HEK293T (cell line): ENCODE measurements at regions of chr10 and their contacts with region 1.

Region 1: DNA sequence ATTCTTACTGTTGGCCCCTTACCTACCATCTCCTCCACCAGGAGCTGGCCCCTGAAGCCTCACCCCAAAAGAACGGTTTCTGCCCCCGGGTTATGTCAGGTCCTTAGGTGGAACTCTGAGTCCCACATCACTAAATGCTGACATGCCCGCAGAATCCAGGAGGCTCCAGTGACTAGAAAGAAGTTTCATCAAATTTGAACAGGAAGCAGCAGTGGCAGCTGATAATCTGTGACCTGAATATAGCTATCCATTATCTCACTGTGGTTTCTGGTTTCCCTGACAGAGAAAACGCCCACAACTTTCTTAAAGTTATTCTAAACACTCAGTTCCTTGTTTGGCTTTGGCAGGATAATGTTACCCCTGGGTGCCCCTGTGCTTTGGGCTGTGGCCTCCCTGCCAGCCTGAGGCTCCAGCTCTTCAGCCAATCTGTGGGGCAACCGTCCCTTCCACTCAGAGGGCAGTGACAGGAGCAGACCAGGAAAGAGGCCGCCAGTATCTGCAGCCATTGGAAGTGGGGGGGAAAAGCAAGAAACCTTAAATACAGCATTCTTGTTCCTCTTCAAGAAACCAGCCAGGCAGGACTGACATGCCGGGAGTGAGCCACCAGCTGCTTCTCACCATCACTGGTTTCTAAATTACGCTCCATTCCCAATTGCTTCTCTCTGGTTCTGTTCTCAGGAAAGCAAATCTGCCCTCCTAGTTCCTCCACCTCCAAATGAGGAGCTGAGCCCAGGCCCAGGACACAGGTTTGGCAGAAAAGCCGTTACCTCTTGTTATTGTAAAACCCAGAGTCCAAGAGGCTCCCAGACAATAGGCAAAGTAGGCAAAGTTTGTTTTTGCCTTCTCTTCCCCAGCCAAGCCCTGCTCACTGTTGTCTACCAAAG is 41.2 kb upstream of the VCL start:
- DNase-seq: no peak

Region 2: GRCh38 chr10:73332221-73332778 is 624.4 kb before region 1 on chr10:
- CTCF ChIA-PET with region 1: no interaction called
- POLR2A ChIA-PET with region 1: no interaction called
- DNase-seq: no peak

Region 3: DNA sequence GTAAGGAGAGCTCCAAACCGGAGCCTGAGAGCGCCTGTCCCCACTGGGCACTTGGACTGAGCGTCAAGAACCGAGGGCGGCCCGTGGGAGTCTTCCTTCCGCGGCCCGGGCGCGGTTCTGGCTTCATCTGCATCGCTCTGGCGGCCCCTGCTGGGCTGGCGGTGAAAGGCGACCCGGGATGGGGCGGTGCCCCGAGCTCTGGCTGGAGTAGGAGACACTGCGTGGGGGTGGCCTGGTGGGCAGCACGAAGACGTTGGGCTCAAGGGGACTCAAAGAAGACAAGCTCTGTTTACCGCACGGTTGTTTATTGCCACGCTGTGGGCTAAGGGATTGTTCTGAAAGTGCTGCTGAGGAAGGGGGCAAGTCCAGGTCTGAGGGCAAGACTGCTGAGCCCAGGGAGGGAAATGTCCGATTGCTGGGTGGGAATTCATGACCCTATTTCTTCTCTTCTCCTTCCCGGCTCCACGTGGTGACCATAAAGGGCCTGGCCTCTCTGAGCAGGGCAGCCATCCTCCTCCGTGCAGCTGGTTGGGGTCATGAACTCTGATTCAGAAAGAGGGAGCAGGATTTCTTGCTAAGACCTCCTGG is 16.0 kb before region 1 on chr10:
- CTCF ChIA-PET with region 1: interaction called, 14 read pairs
- POLR2A ChIA-PET with region 1: interaction called, 3 read pairs
- DNase-seq: peak; percentile 84

Region 4: DNA sequence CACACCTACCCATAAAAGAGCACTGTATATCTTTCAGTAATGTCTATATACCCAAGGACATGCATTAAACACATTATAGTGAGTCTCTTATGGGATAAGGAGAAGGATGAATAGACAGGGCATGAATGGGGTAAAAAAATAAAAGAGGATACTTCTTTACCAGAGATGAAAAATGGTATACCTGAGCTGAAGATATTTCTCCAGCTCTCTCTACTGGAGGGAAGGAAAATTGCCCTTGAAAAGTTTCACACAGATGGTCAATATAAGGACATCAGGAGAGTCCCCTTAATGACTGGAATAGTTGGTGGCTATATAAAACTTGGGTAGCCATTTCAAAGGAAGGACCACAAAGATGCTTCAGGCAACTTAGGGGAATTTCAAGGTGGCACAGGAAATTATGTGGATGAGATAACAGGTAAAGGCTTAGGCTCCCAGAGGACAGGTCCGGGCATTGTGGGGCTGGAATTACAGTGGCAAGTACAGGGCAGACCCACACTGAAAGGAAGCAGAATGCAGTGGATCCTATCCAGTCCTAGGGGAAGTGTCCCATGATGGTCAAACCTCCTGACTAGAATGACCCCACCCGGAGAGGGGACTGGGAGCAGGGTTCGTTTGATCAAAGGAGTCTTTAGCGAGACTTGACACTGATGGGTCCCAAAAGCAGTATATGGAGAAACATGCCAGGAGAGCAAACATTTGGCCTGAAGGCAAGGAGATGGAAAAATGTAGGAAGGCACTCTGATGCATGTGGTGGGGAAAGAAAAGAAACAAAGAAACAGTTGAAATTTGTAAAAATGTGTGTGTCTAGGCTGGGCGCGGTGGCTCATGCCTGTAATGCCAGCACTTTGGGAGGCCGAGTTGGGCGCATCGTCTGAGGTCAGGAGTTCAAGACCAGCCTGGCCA is 10.2 kb before region 1 on chr10:
- CTCF ChIA-PET with region 1: interaction called, 14 read pairs
- POLR2A ChIA-PET with region 1: no interaction called
- DNase-seq: no peak

Region 5: DNA sequence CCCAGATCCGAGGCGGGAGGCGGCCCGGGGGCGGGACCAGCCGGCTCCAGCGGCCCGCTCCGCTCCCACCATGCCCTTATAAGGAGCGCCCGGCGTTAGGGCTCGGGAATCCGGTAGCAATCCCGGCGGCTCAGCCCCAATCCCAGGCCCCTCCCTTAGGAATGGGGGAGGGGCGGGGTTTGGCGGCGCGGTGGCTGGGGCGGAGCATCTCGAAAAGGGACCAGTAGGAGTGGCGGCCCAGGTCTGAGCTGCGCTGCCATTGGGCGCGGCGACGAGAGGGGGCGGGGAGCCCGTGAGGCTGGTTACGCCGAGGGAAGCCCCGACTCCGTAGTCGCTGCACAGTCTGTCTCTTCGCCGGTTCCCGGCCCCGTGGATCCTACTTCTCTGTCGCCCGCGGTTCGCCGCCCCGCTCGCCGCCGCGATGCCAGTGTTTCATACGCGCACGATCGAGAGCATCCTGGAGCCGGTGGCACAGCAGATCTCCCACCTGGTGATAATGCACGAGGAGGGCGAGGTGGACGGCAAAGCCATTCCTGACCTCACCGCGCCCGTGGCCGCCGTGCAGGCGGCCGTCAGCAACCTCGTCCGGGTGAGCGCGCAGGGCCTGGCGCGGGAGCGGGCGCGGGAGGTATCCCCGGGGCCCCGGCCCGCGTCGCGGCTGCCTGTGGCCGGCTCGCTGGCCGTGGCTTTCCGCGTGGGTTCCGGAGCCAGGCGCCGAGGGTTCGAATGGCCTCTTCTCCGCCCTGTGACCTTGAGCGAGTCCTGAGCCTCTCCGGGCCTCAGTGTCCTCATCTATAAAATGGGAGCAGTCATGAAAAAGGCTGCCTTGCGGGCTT is 41.3 kb after region 1 on chr10 and contains the start of gene VCL:
- CTCF ChIA-PET with region 1: interaction called, 4 read pairs
- POLR2A ChIA-PET with region 1: interaction called, 11 read pairs
- DNase-seq: peak; percentile 97